ENCODE measurements at regions of chr6 and their contacts with region 1.

Region 1: DNA sequence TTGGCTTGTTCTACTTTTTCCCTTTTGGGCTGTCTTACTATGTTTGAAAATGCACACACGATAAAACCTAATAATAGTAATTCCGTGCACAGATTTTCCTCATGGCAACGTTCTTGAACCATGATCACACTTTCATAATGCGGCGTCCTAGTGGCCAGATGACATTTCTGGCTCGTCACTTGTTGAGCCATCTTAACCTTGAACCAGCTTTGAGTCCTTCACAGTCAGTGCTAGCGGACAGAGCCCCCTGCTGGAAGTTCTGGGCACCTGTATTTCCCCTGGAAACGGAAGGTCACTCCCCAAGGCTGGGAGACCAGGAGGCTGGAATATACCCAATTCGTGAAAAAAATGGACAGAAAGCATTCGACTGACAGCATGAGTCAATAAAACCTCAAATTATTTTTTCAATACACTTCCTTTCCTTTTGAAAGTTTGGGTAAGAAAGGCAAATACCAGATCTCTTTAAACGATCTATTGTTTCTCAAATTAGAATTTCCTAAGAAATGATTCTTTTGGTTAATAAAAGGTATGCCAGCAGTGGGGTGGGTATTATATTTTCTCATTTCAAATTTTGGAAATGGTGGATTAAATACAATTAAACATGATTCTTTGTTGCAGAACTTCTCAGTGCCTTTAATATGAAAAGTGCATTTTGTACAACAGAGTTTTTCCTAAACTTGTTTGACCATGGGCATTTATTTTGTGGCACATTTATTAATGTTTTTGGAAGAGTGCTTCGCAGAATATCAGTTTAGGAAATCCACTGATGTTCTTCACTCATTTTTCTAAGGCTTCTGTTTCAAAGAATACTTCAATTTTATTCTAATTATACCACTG is 542.3 kb downstream of the QKI start:
- DNase-seq: peak; percentile 79 to 90
- ATAC-seq: peak; percentile 82 to 93 (median 91)
- H3K4me3 ChIP-seq: peak overlapping the region in 1 of 10 donors; percentile 2
- H3K27ac ChIP-seq: peak overlapping the region in 7 of 10 donors; percentile 7 to 94 (median 56)
- H3K4me1 ChIP-seq: peaks cover 0 to 51% (median 27%) of the 10 kb centered on the region in 9 donors
- H3K27me3 ChIP-seq: peaks cover 0 to 4% (median 0%) of the 10 kb centered on the region in 7 donors
- CTCF ChIP-seq: peak; percentile 90 to 98 (median 95)

Region 2: DNA sequence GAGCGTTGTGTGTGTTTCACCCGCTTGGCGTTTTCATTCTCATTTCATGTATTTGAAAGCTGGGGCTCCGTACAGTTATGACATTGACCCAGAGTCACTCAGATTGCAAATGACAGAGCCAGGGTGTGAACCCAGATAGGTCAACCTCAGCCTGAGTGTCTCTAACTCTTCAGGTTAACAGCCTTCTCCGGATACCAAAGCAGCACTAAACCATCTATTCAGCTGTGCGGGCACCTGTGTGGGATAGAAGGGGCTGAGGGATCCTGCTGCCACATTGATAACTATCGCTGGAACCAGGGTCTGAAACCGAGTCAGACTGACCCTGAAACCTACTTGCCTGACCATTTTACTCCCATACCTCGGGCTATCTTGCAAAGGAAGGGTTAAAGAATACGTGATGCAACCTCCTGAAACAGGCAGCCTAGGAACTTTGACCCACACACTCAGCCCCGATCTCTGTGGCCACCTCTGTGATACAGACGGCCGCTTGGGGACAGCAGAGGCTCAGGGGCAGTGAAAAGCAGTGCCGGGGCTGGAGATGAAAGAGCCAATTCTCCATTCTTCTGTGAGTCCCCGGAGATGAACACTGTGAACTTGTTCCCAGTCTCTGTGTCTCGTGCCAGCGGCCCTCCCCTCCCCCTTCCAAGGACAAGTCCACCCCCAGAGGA is 775.8 kb before region 1 on chr6:
- intact Hi-C with region 1: loop called in 9 of 10 experiments (anchors 1 to 10 kb)
- DNase-seq: peak; percentile 82 to 83
- ATAC-seq: peak; percentile 94 to 97 (median 96)
- H3K4me3 ChIP-seq: peak overlapping the region in 5 of 10 donors; percentile 2 to 31 (median 26)
- H3K27ac ChIP-seq: peak overlapping the region in 6 of 10 donors; percentile 5 to 33 (median 25)
- H3K4me1 ChIP-seq: peaks cover 4 to 36% (median 23%) of the 10 kb centered on the region in 9 donors
- H3K27me3 ChIP-seq: no peaks in the 10 kb centered on the region
- CTCF ChIP-seq: peak; percentile 74 to 96 (median 91)

Region 3: DNA sequence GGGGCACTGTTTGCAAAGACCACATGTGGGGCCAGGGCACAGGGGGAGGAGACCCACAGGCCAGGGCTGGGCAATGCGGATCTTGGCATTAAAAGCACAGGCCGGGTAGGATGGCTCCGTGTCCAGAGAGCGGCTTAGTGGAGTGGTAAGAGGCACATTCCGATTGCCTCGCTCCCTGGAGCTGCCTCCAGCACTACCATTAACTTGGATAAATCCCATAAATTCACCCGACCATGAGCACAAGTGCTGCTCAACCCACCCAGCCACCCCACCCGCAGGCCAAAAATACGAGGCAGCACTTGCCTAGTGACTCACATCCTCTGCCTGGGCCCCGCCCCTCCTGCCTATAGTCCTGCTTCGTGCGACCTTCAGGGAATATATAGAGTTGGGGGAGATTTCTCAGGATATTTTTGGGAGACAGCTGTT is 609.8 kb before region 1 on chr6:
- intact Hi-C with region 1: loop called in 1 of 10 experiments (anchors 10 kb)
- DNase-seq: no peak
- ATAC-seq: peak in 7 of 8 donors; percentile 21 to 43 (median 31)
- H3K4me3 ChIP-seq: no peak overlapping the region
- H3K27ac ChIP-seq: peak overlapping the region in 9 of 10 donors; percentile 22 to 61 (median 54)
- H3K4me1 ChIP-seq: peaks cover 6 to 38% (median 23%) of the 10 kb centered on the region in 9 donors
- H3K27me3 ChIP-seq: no peaks in the 10 kb centered on the region
- CTCF ChIP-seq: no peak

Region 4: GRCh38 chr6:163419413-163420288 is 537.1 kb before region 1 on chr6:
- intact Hi-C with region 1: loop called in 9 of 10 experiments (anchors 2 to 10 kb)
- DNase-seq: no peak
- ATAC-seq: no peak
- H3K4me3 ChIP-seq: peak overlapping the region; percentile 5 to 93 (median 89)
- H3K27ac ChIP-seq: peak overlapping the region; percentile 67 to 100 (median 99)
- H3K4me1 ChIP-seq: peaks cover 5 to 78% (median 53%) of the 10 kb centered on the region in 9 donors
- H3K27me3 ChIP-seq: no peaks in the 10 kb centered on the region
- CTCF ChIP-seq: no peak

Region 5: GRCh38 chr6:163579880-163580295 is 376.9 kb before region 1 on chr6:
- intact Hi-C with region 1: loop called in 7 of 10 experiments (anchors 5 to 10 kb)
- DNase-seq: no peak
- ATAC-seq: peak in 5 of 8 donors; percentile 30 to 46 (median 35)
- H3K4me3 ChIP-seq: no peak overlapping the region
- H3K27ac ChIP-seq: peak overlapping the region in 7 of 10 donors; percentile 3 to 51 (median 25)
- H3K4me1 ChIP-seq: peaks cover 0 to 48% (median 17%) of the 10 kb centered on the region in 9 donors
- H3K27me3 ChIP-seq: no peaks in the 10 kb centered on the region
- CTCF ChIP-seq: peak in 3 of 9 donors; percentile 37 to 47 (median 41)

Region 6: DNA sequence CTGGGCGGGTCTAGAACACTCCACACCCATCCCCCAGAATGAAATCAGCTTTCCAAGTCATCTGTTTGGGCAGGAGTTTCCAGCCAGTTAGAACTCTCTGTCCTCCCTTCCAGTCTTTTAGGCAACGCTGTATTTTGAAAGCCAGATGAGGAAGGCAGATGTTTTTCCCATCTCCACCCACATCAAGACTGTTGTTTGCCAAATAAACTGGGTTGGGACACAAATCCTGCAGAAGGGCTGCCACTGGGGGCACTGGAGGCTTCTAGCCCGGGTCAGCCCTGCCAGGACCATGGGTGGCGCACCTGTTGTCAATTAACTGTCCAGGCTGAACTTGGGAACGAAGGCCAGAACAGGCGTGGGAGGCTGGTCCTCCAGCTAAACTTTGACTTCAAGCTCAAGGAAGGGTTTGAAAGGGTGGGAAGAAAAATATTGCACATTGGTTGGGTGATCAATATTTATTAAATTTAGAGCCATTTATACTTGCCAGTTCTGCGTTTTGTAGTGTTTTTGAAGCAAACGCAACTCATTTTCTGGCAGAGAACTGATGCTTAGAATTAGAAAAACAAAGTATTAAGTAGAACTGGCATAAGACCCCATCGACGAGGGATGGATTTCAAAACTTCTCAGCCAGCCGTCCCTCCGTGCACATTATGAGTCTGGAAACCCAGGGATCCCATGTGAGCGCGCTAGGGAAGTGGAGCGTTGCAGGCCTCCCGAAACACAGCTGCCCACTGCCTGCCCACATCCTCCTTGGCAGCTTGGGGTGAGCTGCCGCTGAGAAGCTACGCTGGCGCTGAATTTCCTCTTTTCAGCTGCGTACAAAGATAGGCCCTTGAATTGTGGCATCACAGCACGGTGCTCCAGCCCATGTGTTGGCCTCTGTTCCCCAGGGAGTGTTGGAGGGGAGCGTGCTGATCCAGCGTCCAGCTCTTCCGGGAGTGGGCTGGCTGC is 244.9 kb before region 1 on chr6:
- intact Hi-C with region 1: loop called in 4 of 10 experiments (anchors 5 to 10 kb)
- DNase-seq: peak; percentile 80 to 83
- ATAC-seq: peak; percentile 67 to 81 (median 76)
- H3K4me3 ChIP-seq: no peak overlapping the region
- H3K27ac ChIP-seq: peak overlapping the region; percentile 69 to 86 (median 80)
- H3K4me1 ChIP-seq: peaks cover 28 to 68% (median 61%) of the 10 kb centered on the region in 9 donors
- H3K27me3 ChIP-seq: no peaks in the 10 kb centered on the region
- CTCF ChIP-seq: peak in 8 of 9 donors; percentile 17 to 59 (median 39)

Region 7: DNA sequence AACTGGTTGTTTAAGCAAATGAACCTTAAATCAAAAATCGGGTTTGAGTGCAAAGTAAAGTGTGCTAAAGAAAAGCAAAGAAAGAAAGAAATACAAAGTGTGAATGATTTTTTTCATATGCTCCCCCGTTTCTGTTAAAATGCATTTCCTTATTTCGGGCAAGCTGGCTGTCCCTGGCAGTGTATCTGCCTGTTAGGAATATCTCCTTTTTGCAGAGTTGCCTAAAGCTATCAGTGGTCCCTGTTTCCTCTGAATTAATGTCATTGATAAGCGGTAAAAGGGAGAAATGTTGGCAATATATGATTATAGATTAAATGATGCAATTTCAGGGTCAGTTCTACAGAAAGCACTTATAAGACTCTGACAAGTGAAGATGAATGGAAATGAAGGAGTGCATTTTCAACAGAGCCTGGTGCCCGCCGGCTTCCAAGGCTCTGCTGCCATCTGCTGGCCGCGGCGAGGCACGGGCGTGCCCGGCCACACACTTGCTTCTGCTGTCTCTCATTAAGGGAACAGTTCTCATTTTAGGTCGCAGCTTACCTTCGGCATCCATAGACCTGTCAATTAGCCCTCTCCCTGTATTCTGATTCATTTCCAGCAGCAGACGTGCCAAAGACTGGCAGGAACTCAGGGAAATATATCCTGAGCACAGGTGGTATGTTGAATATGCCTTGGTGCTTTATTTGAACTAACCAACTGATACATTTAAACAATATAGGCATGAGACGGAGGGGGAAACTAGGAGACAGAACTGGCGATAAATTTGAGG is 970.7 kb after region 1 on chr6:
- intact Hi-C with region 1: loop called in 2 of 10 experiments (anchors 5 to 10 kb)
- DNase-seq: peak; percentile 48 to 74
- ATAC-seq: peak; percentile 83 to 96 (median 92)
- H3K4me3 ChIP-seq: peak overlapping the region in 3 of 10 donors; percentile 10 to 18 (median 14)
- H3K27ac ChIP-seq: no peak overlapping the region
- H3K4me1 ChIP-seq: peaks cover 0 to 13% (median 7%) of the 10 kb centered on the region in 9 donors
- H3K27me3 ChIP-seq: no peaks in the 10 kb centered on the region
- CTCF ChIP-seq: peak; percentile 94 to 100 (median 97)

Measured in heart right ventricle (tissue), 16 donors.